Esophagus squamous epithelium (tissue), 5 donors: ENCODE measurements at regions of chr11 and their contacts with region 1.

Region 1: DNA sequence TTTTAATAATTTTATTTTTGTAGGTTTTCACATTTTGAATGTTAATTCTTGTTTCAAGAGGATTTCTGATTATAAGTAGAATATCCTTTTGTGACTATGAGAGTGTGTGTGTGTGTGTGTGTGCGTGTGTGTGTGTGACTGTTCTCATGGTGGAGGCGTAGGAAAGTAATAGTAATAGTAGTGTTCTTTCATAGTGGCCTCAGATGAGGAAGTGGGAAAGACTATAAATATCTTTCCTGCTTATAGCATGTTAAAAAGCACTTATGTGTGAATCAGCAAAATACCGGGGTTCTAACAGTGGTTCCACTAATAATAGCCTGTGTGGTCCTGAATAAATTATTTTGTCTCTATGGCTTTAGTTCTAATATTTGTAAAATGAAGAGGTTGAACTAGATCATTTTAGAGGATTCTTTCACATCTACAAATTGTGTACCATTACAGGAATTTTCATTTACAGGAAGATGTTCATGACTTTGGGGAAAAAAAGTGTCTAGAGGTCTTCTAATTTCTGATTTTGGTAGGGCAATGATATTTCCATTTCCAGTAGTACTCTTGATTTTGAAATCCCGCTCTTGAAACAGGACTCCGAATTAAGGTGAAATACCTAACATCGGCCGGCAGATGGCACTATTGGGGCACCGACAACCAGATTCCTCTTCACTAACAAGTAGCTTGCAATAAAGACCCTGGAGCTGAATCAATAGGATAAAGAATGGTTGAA is 29.9 kb upstream of the OR10G7 start:
- DNase-seq: no peak
- H3K4me3 ChIP-seq: no peak overlapping the region
- H3K27ac ChIP-seq: no peak overlapping the region
- H3K4me1 ChIP-seq: peaks cover 5 to 24% (median 10%) of the 10 kb centered on the region in 3 donors
- H3K27me3 ChIP-seq: peaks cover 0 to 69% (median 1%) of the 10 kb centered on the region in 4 donors
- CTCF ChIP-seq: peak; percentile 48 to 76 (median 60)
- POLR2A ChIP-seq: no peak

Region 2: DNA sequence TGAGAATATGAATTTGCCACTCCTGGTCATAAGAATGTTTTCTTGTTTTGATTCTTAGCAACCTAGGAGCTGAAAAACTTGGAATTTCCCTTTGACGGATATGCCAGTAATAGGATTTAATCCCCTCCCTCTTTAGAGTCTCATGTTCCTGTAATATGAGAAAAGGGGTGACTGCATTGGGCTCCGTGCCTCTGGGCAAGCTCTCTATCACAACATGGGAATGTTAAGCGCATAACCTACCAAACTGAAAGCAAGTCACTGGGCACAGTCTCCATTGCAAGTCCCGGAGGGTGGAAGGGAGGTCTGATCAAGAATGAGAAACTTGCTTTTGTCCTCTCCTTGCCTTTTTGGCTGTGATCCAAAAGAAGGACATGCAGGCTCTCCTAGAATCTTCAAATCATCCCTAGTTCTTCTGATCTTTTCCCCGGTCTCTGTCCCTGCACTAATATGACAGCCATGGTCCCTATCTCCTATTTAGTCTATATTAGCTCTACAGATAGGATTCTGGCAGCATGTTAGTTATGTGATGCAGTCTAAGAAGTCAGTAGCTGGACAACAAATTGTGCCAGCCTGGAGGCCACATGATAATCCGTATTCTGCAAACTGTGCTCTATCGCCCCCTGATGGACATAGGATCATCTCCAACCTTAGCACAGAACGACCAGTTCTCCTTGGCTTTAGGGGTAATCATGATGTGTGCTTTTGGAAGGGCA is 123.8 kb after region 1 on chr11:
- intact Hi-C with region 1: loop called (anchors 5 kb)
- DNase-seq: no peak
- H3K4me3 ChIP-seq: no peak overlapping the region
- H3K27ac ChIP-seq: peak overlapping the region in 1 of 4 donors; percentile 10
- H3K4me1 ChIP-seq: no peaks in the 10 kb centered on the region
- H3K27me3 ChIP-seq: no peaks in the 10 kb centered on the region
- CTCF ChIP-seq: peak in 5 of 6 experiments; percentile 37 to 69 (median 62)
- POLR2A ChIP-seq: no peak